ENCODE measurements at regions of chr6 and their contacts with region 1.

Region 1: GRCh38 chr6:3518356-3519225 is 61.7 kb upstream of the SLC22A23 start:
- DNase-seq: peak; percentile 90
- ATAC-seq: peak; percentile 98
- H3K4me3 ChIP-seq: no peak overlapping the region
- H3K27ac ChIP-seq: peak overlapping the region; percentile 73
- H3K4me1 ChIP-seq: peaks cover 31% of the 10 kb centered on the region
- H3K27me3 ChIP-seq: no peaks in the 10 kb centered on the region
- CTCF ChIP-seq: no peak

Region 2: DNA sequence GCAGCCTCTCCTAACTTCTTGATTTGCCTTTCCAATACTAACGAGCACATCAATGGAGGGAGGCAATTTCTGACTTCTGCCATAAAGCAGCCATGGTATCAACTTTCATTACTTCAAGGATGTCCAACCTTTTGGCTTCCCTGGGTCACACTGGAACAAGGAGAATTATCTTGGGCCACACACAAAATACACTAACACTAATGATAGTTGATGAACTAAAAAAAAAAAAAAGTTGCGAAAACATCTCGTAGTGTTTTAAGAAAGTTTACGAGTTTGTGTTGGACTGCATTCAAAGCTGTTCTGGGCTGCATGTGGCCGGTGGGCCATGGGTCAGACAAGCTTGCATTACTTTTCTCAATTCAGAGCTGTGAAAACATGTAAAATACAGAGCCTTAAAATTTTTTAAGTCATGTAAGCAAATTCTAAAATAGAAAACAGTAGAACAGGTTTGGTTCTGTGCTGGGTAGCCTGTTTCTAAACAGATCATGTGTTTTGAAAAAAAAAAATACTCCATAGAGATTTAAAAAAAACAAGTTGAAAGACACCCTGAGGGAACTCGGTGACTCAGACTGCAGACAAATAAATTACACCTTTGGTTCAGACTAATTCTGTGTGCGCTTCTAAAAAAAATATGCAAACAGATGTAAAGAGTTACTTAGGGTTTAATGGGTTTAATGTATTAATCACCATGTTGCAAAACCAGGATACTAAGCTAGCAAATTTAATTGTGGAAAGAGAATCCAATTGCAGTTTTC is 18.2 kb before region 1 on chr6:
- CTCF ChIA-PET with region 1: no interaction called
- POLR2A ChIA-PET with region 1: no interaction called
- intact Hi-C with region 1: loop called (anchors 1 kb)
- DNase-seq: peak; percentile 88
- ATAC-seq: peak; percentile 92
- H3K4me3 ChIP-seq: peak overlapping the region; percentile 16; the same call in 1 of the 2 replicates
- H3K27ac ChIP-seq: peak overlapping the region; percentile 14; the same call in 1 of the 2 replicates
- H3K4me1 ChIP-seq: peaks cover 22% of the 10 kb centered on the region
- H3K27me3 ChIP-seq: 0 out of 2 replicates have a peak, but pooled peaks cover 5% of the 10 kb centered on the region
- CTCF ChIP-seq: no peak

Measured in PC-3 (cell line).